ENCODE measurements at regions of chr15 and their contacts with region 1.

Region 1: DNA sequence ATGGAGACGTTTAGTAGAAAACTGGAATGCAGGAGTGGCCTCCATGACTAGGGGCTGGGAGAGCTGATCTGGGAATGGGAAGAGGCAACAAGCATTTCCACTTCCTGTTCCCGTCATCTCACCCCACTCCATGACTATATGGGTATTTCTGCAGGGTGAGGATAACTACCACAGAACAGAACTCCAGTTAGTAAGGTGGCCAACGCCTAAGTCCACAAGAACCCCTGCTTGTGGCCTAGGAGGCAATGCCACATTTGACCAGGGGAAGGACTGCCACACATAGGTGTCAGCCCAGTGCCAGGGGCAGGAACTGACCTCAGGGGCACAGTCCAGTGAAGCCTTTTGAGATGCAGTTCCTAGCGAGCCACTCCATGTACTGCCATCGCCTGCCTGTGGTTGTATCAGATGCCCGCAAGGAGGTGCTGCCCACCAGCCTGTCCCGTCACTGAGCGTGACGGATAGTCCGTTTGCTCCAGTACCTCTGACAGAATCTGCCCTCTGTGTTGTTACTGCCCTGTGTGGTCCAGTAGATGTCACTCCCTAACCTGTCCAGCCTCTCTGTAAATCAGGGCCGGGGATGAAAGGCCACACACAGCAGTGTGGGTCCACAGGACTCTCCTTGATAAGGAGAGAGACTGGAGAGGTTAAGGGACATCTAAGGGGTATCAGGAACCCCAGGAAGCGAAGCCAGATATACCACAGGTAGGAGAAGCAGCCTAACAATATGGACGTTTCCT is 3.5 kb upstream of the MTFMT start:
- DNase-seq: peak; percentile 75
- H3K4me3 ChIP-seq: no peak overlapping the region
- H3K27ac ChIP-seq: no peak overlapping the region
- H3K4me1 ChIP-seq: peaks cover 4% of the 10 kb centered on the region
- H3K27me3 ChIP-seq: no peaks in the 10 kb centered on the region
- CTCF ChIP-seq: peak; percentile 42 to 63 (median 62)
- POLR2A ChIP-seq: no peak

Region 2: DNA sequence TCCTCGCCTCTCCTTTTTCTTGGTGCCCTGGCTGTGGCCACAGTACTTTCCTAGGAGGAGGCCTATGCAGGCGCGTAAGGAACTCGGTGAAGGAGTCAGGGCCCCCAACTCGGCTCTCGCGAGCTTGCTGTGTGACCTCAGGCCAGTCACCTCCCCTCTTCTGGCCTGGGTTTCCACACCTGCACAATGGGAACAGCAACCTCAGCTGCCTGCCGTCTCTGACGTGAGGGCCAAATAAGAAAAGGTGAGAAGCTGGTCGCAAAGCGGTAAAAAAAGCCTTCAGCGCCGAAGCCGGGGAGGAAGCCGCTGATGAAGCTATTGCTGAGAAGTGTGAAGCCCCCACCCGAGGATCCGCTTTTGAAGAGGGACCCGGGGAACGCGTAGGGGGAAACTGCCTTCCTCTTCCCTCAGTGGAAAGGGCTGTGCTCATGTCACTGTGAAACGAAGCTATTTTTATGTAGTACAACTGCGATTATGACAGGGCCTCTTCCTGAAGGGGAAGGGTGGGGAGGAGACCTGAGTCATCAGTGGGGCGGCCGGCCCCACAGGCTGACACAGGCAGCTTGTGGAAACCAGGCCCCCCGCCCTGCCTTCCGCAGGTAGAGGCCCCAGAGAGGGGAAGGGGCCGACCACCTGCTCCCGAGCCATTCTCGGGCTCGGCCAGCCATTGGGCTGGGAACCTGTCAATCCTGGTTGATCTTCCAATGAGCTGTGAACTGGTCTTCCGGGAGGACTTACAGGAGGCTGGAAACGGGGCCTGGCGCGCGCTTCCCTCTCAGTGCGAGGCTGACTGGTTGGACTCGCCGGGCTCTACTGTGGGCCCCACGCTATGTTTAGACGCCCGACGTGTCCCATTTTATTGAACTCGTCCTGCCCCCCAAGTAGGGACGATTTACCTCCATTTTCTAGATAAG is 139.2 kb before region 1 on chr15:
- intact Hi-C with region 1: no loop called
- DNase-seq: peak; percentile 95
- H3K4me3 ChIP-seq: peak overlapping the region; percentile 23 to 38
- H3K27ac ChIP-seq: peak overlapping the region; percentile 85 to 86
- H3K4me1 ChIP-seq: peaks cover 63% of the 10 kb centered on the region
- H3K27me3 ChIP-seq: no peaks in the 10 kb centered on the region
- CTCF ChIP-seq: no peak
- POLR2A ChIP-seq: no peak

Region 3: GRCh38 chr15:65086017-65086679 is 53.2 kb after region 1 on chr15:
- intact Hi-C with region 1: loop called (anchors 10 kb)
- DNase-seq: peak; percentile 65
- H3K4me3 ChIP-seq: no peak overlapping the region
- H3K27ac ChIP-seq: peak overlapping the region in 1 of 2 donors; percentile 78
- H3K4me1 ChIP-seq: peaks cover 51% of the 10 kb centered on the region
- H3K27me3 ChIP-seq: no peaks in the 10 kb centered on the region
- CTCF ChIP-seq: peak in 2 of 3 experiments; percentile 20 to 45
- POLR2A ChIP-seq: no peak